ENCODE measurements at regions of chr2 and their contacts with region 1.

Region 1: DNA sequence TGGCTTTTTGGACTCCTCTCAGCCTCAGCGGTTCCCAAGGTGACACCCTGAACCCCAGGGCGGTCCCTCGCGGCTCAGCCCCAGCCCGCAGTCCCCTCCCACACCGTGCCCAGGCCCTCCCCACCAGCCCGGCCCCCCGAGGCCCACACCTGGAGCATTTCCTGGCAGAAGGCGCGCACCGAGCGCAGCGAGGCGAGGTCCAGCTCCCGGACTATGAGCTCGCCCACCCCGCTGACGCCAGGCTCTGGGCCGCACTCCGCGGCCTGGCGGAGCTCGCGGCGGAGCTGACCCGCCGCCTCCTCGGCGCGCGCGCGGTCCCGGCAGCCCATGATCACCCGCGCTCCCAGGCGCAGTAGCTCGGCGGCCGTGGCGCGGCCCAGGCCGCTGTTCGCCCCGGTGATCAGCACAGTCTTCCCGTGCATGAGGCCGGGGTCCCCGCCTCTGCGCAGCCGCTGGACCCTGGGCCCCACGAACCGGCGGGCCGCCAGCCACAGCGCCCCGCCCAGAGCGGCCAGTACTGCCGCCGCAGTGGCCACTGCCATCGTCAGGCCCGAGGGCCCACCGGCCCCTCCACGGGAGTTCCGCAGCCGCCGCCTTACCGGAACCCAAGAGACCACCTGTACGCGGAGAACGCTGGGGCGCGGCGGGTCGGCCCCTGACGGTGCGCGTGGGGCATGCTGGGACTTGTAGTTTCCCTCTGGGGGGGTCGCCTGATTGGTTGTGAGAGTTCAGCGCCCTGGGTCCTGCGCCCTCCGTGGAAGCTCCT is at the start of gene RDH14:
- DNase-seq: peak; percentile 94
- H3K4me3 Mint-ChIP-seq: peak within 1 kb of the TSS; percentile 84
- H3K27ac Mint-ChIP-seq: peak within 1 kb of the TSS; percentile 89
- H3K4me1 Mint-ChIP-seq: peaks cover 35% of the 10 kb centered on the region
- H3K27me3 Mint-ChIP-seq: no peaks in the 10 kb centered on the region
- total RNA-seq, gene RDH14: 11.4 to 11.6 TPM

Region 2: GRCh38 chr2:17753803-17754663 is 806.2 kb before region 1 on chr2 and contains the starts of genes GEN1 and SMC6:
- CTCF ChIA-PET with region 1: no interaction called
- intact Hi-C with region 1: loop called (anchors 5 kb)
- DNase-seq: peak; percentile 90
- H3K4me3 Mint-ChIP-seq: peak within 1 kb of the TSS; percentile 85
- H3K27ac Mint-ChIP-seq: peak within 1 kb of the TSS; percentile 96
- H3K4me1 Mint-ChIP-seq: peaks cover 31% of the 10 kb centered on the region
- H3K27me3 Mint-ChIP-seq: no peaks in the 10 kb centered on the region
- total RNA-seq, gene GEN1: 13.4 to 15.5 TPM
- total RNA-seq, gene SMC6: 21.6 to 22.8 TPM

Region 3: GRCh38 chr2:18520451-18521425 is 39.5 kb before region 1 on chr2:
- CTCF ChIA-PET with region 1: interaction called, 6 read pairs
- intact Hi-C with region 1: loop called (anchors 1 kb)
- DNase-seq: peak; percentile 81
- H3K4me3 Mint-ChIP-seq: no peak overlapping the region
- H3K27ac Mint-ChIP-seq: no peak overlapping the region
- H3K4me1 Mint-ChIP-seq: no peaks in the 10 kb centered on the region
- H3K27me3 Mint-ChIP-seq: peaks cover 18% of the 10 kb centered on the region

Region 4: DNA sequence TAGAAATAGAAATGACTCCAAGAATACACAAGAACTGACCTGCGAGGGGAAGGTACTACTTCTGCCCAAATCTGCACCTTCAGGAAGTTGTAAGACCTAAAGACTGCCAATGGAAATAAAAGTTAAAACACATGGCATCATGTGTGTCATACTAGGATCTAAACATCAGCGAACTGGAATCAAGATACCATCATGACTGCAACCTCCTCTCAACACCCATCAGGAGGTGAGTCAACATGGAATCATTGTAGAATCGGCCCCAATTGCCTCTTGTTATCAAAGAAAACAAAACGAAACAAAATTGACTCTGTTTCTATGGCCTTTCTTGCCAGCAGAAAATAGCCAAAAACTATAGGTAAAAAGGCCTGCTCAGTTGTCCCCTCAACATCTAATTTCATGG is 14.8 kb before region 1 on chr2:
- CTCF ChIA-PET with region 1: interaction called, 3 read pairs
- intact Hi-C with region 1: loop called (anchors 1 kb)
- DNase-seq: no peak
- H3K4me3 Mint-ChIP-seq: no peak overlapping the region
- H3K27ac Mint-ChIP-seq: no peak overlapping the region
- H3K4me1 Mint-ChIP-seq: peaks cover 35% of the 10 kb centered on the region
- H3K27me3 Mint-ChIP-seq: no peaks in the 10 kb centered on the region

Region 5: DNA sequence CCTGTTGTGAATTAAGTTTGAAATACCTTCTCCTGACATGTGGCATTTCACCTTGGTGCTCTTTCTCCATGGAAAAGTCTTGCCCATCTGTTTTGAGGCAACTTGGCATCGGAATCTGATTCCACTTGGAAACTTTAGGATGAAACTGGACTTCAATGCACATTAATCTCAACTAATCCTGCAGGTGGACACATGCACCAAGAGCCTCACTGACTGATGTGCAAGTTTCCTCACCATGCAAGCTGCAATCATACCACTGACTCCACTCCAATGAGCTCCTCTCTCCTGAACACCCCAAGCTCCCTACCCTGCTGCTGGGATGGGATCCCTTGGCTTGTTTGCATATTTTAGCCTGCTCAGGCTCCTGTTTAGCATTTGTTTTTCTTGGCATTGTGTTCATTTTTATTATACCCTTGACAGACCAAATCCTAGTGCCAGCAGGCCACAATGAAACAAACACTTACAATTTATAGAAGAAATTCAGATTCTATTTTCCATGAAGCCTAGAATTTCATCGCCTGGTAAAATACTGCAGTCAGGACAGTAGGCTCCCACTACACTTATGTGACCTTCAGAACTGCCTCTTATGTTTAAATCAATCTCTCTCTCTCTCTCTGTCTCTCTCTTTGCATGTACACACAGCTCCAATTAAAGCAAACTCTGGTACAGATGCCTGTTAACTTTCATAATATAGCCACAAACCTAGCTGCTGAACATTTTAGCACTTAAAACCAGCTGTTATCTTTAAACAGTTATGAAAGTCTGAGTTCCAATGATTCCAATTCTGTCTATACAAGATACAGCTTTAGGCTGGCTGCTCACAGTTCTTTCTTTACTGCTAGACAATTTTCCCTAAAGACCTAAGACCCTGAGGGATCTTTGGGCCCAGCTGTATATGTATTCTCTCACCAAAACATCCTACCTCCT is 656.7 kb after region 1 on chr2:
- CTCF ChIA-PET with region 1: no interaction called
- intact Hi-C with region 1: no loop called
- DNase-seq: no peak
- H3K4me3 Mint-ChIP-seq: no peak overlapping the region
- H3K27ac Mint-ChIP-seq: no peak overlapping the region
- H3K4me1 Mint-ChIP-seq: peaks cover 4% of the 10 kb centered on the region
- H3K27me3 Mint-ChIP-seq: no peaks in the 10 kb centered on the region

Region 6: DNA sequence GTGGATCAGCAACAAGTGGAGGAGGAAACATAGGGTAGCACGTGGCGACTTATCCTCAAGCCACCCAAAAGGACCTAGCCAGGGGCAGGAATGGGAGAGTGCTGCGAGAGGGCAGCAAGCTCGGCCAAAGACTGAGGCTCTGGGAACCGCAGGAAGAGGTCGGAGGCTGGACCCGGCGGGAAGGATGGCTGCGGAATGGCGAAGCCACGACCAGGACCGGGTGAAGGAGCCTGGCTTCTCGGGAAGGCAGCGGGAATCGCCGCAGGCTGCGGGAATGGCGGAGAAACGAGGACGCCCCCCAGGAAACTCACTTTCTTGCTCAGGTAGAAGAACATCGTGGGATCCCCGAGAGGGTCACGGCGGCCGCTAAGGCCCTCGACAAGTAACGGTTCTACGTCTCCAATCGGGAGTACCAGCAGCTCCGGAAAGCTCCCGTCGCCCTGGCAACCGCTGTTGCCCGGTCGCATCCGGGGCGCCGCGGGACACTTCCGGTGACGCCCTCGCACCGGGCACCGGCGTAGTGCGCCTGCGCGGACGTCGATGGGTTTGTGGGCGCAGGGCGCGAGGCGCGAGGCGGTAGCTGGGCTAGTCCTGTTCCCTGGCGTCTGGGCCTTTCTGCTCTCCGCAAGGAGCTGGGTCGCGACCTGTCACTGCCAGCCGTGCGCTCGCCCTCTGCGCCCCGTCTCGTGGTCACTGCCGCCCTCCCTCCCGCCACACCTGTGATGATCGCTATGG is 1429.6 kb after region 1 on chr2 and contains the start of gene WDR35:
- CTCF ChIA-PET with region 1: no interaction called
- intact Hi-C with region 1: loop called (anchors 1 kb)
- DNase-seq: peak; percentile 91
- H3K4me3 Mint-ChIP-seq: peak within 1 kb of the TSS; percentile 87
- H3K27ac Mint-ChIP-seq: peak within 1 kb of the TSS; percentile 54
- H3K4me1 Mint-ChIP-seq: peaks cover 28% of the 10 kb centered on the region
- H3K27me3 Mint-ChIP-seq: peaks cover 13% of the 10 kb centered on the region
- total RNA-seq, gene WDR35: 4.3 to 4.4 TPM

Measured in activated naive CD4-positive, alpha-beta T cell treated with anti-CD3 and anti-CD28 coated beads for 36 hours (primary cell).